ENCODE measurements at regions of chr19 and their contacts with region 1.

Region 1: DNA sequence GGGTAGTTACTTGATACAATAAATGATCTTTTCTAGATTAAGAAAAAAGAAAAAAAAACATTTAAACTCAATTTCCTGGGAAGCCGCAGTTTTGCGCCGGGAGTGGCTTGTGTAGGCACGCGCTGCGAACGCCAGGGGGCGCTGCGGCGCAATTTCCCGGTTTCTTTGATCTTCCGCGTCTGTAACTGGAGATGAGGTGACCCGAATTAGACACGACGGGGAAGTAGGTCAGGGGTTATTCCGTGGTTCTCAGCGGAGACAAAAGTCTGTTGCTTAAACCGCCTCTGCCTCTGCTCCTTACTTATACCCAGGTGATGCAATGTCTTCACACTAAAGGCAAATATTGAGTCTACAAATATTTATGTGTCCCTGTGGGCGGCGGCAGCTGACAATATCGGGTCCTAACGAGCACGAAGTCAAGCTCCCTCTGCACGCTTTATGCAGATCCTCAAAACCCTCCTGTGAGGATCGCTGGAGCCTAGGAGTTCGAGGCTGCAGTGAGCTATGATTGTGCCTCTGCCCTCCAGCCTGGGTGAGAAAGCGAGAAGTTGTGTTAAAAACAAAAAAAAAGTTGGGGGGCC is 15.2 kb downstream of the STXBP2 start:
- ATAC-seq: peak; percentile 66 to 88 (median 78)
- H3K4me3 ChIP-seq: peak overlapping the region in 2 of 5 donors; percentile 6
- H3K27ac ChIP-seq: no peak overlapping the region
- H3K4me1 ChIP-seq: no peaks in the 10 kb centered on the region

Region 2: DNA sequence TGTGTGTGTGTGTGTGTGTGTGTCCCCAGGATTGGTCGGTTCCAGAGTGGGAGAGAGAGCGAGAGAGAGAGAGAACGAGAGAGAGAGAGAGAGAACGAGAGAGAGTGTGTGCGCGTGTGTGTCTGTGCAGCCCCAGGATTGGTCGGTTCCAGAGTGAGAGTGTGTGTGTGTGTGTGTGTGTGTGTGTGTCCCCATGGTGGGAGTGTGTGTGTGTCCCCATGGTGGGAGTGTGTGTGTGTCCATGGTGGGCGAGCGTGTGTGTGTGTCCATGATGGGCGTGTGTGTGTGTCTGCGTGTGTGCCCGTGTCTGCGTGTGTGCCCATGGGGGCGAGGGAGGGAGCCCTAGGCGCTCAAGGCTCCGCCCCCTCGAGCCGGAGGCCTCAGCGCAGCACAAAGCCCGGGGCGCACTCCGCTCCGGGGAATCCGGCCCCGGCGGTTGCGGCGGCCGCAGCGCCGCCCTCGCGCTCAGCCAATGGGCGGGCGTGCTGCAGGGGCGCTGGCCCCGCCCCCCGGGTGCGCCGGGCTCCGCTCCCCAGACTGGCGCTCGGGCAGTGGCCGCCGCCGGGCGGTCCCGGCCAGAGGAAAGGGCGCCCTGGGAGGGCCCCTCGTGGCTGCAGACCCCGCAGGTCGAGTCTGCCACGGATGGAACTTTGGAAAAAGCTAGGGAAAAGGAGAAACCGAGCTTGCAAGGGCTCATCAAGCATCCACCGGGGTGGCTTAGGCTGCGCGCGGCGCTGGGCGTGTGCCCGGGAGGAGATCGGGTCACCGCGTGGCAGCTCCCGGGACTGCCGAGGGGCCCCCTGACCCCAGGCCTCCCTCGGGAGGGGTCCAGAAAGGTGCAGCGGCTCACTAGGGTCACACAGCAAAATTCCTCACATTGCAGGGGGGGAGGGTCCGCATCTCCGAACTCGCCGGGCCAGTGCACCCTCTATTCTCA is 454.1 kb before region 1 on chr19:
- in situ Hi-C with region 1: no loop called
- ATAC-seq: peak; percentile 79 to 90 (median 86)
- H3K4me3 ChIP-seq: peak overlapping the region; percentile 46 to 91 (median 76)
- H3K27ac ChIP-seq: peak overlapping the region in 1 of 2 donors; percentile 42
- H3K4me1 ChIP-seq: peaks cover 0 to 3% of the 10 kb centered on the region in 2 donors

Region 3: DNA sequence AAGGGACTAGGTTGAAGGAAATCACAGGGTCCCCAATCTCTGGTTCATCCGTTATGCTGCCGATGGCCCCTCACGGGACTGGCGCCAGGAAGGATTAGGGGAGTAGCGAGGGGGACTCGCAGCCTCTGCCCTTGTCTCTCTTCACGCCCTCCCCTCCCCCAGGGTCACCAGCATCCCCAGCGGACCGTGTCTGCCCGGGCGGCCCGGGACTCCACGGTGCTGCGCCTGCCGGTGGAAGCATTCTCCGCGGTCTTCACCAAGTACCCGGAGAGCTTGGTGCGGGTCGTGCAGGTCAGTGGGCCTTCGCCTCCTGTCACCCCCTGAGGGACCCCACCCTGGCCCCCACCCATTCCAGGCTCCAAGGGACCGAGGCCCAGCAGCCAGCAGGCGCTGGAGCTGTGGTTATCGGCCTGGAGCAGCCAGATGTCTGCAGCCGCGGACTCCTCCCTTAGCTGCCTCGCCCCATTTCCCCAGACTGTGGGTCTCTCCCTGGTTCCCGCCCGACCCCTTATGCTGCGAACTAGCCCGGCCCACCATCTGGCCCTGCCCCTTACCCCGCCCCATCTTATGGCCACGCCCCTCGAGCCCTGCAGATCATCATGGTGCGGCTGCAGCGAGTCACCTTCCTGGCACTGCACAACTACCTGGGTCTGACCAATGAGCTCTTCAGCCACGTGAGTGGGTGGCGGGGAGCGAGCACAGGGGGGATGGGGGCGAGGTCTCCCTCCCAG is 111.2 kb before region 1 on chr19:
- in situ Hi-C with region 1: no loop called
- ATAC-seq: peak; percentile 46 to 99 (median 62)
- H3K4me3 ChIP-seq: no peak overlapping the region
- H3K27ac ChIP-seq: no peak overlapping the region
- H3K4me1 ChIP-seq: no peaks in the 10 kb centered on the region

Region 4: GRCh38 chr19:7550987-7551761 is 101.0 kb before region 1 on chr19:
- in situ Hi-C with region 1: loop called in 1 of 9 experiments (anchors 25 kb)
- ATAC-seq: peak in 7 of 8 experiments; percentile 48 to 97 (median 94)
- H3K4me3 ChIP-seq: peak overlapping the region; percentile 15 to 26 (median 19)
- H3K27ac ChIP-seq: no peak overlapping the region
- H3K4me1 ChIP-seq: no peaks in the 10 kb centered on the region

Region 5: DNA sequence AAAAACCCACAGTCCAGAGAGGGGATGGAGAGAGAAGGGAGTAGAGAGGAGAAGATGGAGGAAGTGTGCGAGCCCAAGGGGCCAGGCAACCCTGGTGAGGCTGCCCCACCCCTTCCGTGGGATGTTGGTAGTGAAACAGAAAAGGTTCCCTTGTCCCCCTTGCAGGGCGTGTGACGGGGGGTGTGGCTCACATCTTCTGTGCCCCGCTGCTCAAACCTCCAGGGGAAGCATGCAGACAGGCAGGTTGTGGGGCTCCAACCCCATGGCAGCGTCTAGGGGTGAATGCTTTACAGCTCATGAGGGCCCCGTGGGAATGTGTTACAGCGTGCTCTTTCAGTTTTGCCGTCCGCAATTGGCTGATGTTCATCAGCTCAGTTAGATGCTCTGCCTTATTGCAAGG is 163.2 kb after region 1 on chr19:
- in situ Hi-C with region 1: no loop called
- ATAC-seq: no peak
- H3K4me3 ChIP-seq: no peak overlapping the region
- H3K27ac ChIP-seq: no peak overlapping the region
- H3K4me1 ChIP-seq: no peaks in the 10 kb centered on the region